Pancreas (tissue), 10 donors: ENCODE measurements at regions of chr12 and their contacts with region 1.

Region 1: DNA sequence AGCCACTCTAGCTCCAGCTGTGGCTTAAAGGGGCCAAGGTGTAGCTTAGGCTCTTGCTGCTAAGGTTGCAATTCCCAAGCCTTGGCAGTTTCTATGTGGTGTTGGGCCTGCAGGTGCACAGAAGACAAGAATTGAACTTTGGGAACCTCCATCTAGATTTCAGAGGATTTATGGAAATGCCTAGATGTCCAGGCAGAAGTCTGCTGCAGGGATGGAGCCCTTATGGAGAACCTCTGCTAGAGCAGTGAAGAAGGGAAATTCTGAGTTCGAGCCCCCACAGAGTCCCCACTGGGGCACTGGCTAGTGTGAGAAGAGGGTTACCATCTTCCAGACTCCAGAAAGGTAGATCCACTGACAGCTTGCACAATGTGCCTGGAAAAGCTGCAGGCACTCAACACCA is 694.7 kb downstream of the SLC16A7 start:
- DNase-seq: no peak
- ATAC-seq: no peak
- H3K4me3 ChIP-seq: no peak overlapping the region
- H3K27ac ChIP-seq: no peak overlapping the region
- H3K4me1 ChIP-seq: no peaks in the 10 kb centered on the region
- H3K27me3 ChIP-seq: no peaks in the 10 kb centered on the region
- CTCF ChIP-seq: no peak

Region 2: DNA sequence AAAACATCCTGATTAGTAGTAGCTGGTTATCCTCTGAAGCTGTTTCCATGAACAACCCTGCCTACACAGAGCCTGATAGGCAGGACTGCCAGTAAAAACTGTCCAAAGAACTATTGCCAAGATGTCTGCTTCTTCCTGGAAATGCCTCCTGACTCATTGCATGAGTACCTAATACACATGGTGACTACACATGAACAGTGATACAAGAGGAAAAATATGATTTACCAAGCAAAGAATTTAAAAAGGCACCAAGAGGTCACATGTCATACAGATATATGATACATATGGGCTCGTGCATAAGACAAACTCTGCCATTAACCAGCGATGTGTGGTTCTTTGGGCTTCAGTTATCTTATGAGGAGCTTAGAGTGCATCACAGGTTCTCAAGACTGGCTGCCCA is 142.4 kb before region 1 on chr12:
- intact Hi-C with region 1: no loop called
- DNase-seq: no peak
- ATAC-seq: peak in 2 of 4 donors; percentile 83 to 87
- H3K4me3 ChIP-seq: no peak overlapping the region
- H3K27ac ChIP-seq: no peak overlapping the region
- H3K4me1 ChIP-seq: peaks cover 0 to 3% (median 0%) of the 10 kb centered on the region in 3 donors
- H3K27me3 ChIP-seq: no peaks in the 10 kb centered on the region
- CTCF ChIP-seq: no peak

Region 3: GRCh38 chr12:60230056-60230455 is 60.5 kb before region 1 on chr12:
- intact Hi-C with region 1: loop called in 1 of 3 experiments (anchors 10 kb)
- DNase-seq: no peak
- ATAC-seq: no peak
- H3K4me3 ChIP-seq: no peak overlapping the region
- H3K27ac ChIP-seq: no peak overlapping the region
- H3K4me1 ChIP-seq: no peaks in the 10 kb centered on the region
- H3K27me3 ChIP-seq: no peaks in the 10 kb centered on the region
- CTCF ChIP-seq: no peak